OCI-LY7 (cell line): ENCODE measurements at regions of chr9 and their contacts with region 1.

Region 1: DNA sequence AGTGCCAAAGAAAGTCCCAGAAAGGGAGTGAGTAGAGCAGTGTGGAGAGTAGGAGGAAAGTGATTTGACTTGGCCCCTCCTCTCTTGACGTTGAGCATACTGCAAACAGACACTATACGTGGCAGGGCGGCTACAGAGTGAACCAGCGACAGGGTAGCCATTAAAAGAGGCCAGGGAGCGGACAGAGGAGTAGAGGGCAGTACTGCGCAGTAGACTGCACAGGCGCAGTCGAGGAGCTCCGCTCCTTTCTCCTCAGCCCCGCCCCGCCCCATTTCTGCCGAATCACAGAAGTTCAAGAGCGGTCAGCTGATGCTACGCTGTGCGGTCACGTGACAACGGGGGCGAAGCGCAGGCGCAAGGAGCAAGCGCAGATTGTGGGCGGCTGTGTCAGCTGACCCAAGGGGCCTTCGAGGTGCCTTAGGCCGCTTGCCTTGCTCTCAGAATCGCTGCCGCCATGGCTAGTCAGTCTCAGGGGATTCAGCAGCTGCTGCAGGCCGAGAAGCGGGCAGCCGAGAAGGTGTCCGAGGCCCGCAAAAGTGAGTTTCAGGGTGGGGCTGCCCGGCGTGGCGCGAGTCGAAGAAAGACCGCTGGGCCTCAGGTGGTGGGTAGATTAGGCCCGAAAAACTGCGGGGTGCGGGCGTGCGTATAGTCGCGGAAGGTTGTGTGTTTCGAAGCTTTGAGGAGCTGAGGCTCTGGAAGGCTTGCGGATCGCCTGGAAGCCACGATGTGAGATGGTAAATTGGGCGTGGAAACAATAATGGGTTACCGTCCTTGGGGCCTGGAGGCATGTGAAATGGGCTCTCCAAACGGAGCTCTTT is at the start of gene ATP6V1G1:
- DNase-seq: peak; percentile 99
- H3K4me3 ChIP-seq: peak within 1 kb of the TSS; percentile 84
- H3K27ac ChIP-seq: peak within 1 kb of the TSS; percentile 48
- H3K4me1 ChIP-seq: peaks cover 59% of the 10 kb centered on the region
- CTCF ChIP-seq: peak; percentile 47; the same call in 1 of the 2 replicates
- total RNA-seq, gene ATP6V1G1: 117 and 164 TPM in 2 replicates

Region 2: GRCh38 chr9:114538241-114538640 is 49.4 kb before region 1 on chr9:
- CTCF ChIA-PET with region 1: interaction called, 17 read pairs
- POLR2A ChIA-PET with region 1: interaction called, 6 read pairs
- intact Hi-C with region 1: no loop called
- DNase-seq: peak; percentile 84
- H3K4me3 ChIP-seq: no peak overlapping the region
- H3K27ac ChIP-seq: no peak overlapping the region
- H3K4me1 ChIP-seq: peaks cover 26% of the 10 kb centered on the region
- CTCF ChIP-seq: peak; percentile 84

Region 3: GRCh38 chr9:114560956-114561355 is 26.6 kb before region 1 on chr9:
- CTCF ChIA-PET with region 1: no interaction called
- POLR2A ChIA-PET with region 1: interaction called, 4 read pairs
- intact Hi-C with region 1: loop called (anchors 1 kb)
- DNase-seq: no peak
- H3K4me3 ChIP-seq: no peak overlapping the region
- H3K27ac ChIP-seq: no peak overlapping the region
- H3K4me1 ChIP-seq: peaks cover 3% of the 10 kb centered on the region
- CTCF ChIP-seq: no peak

Region 4: DNA sequence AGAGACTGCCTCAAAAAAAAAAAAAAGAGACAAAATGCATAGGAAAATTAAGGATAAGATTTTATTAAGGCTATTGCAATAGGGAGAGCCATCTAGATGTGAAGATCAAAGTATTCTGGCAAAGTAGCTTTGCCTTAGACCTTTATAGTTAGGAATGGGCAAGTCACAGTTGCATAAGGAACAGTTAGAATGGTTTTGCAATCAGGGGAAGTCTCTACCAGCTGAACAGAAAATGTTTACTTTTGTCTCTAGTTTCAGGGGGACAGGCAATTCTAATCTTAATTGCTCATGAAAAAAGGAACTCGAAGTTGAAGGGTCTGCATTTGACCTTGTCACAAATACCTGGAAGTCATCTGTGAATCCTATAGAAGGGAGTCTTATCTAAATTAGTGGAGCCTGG is 13.2 kb before region 1 on chr9:
- CTCF ChIA-PET with region 1: interaction called, 5 read pairs
- POLR2A ChIA-PET with region 1: interaction called, 27 read pairs
- intact Hi-C with region 1: no loop called
- DNase-seq: no peak
- H3K4me3 ChIP-seq: no peak overlapping the region
- H3K27ac ChIP-seq: peak overlapping the region; percentile 13
- H3K4me1 ChIP-seq: peaks cover 41% of the 10 kb centered on the region
- CTCF ChIP-seq: no peak

Region 5: DNA sequence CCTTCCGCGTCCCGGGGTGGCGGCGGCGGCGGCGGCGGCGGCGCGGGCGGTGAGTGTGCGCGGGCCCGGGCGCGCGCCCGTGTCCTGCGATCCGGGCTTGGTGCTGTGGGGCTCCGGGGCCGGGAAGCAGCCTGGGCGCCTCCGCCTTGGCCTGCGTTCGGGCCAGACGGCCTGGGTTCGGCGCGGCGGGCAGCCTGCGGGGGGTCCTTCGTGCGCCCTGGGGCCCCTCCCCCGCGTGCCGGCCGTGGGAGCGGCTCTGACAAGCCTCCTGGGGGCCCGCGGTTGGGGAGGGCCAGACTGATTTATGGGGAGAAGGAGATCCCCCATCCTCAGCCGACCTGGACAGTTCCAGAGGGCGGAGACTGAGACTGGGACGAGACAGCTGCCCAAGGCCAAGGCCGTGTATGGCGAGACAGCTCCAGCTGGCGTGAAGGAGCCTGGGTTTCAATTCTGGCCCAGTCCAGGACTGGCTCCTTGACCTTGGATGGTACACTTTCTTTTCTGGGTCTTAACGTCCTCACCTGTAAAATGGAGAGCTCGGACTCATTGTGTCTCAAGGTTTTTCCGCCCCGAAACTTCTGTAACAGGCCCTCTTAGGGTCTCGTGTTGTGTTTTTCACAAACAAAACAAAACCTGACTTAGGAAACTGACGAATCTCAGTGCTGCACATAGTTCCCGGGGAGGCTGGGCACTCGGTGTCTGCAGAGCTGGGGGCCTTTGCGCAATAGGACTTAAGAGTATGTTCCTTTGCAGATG is 24.1 kb after region 1 on chr9:
- CTCF ChIA-PET with region 1: interaction called, 13 read pairs
- POLR2A ChIA-PET with region 1: interaction called, 47 read pairs
- intact Hi-C with region 1: no loop called
- DNase-seq: peak; percentile 62
- H3K4me3 ChIP-seq: peak overlapping the region; percentile 95
- H3K27ac ChIP-seq: peak overlapping the region; percentile 86
- H3K4me1 ChIP-seq: peaks cover 72% of the 10 kb centered on the region
- CTCF ChIP-seq: no peak